CD14-positive monocyte (primary cell): ENCODE measurements at regions of chr11 and their contacts with region 1.

Region 1: GRCh38 chr11:10792398-10792975 is 16.2 kb downstream of the EIF4G2 start:
- DNase-seq: peak; percentile 83 to 89 (median 86)
- H3K4me3 ChIP-seq: no peak overlapping the region
- H3K4me3 Mint-ChIP-seq: peak overlapping the region in 1 of 2 donors; percentile 36
- H3K27ac ChIP-seq: no peak overlapping the region
- H3K27ac Mint-ChIP-seq: peak overlapping the region in 4 of 7 donors; percentile 21 to 46 (median 34)
- H3K4me1 ChIP-seq: peaks cover 19 to 21% of the 10 kb centered on the region in 2 donors
- H3K4me1 Mint-ChIP-seq: peaks cover 29% of the 10 kb centered on the region
- H3K27me3 ChIP-seq: peaks cover 0 to 4% of the 10 kb centered on the region in 2 donors
- H3K27me3 Mint-ChIP-seq: peaks cover 9 to 23% (median 10%) of the 10 kb centered on the region in 3 donors
- CTCF ChIP-seq: peak; percentile 90

Region 2: GRCh38 chr11:10514210-10514609 is 278.3 kb before region 1 on chr11:
- intact Hi-C with region 1: no loop called
- DNase-seq: peak in 1 of 3 donors; percentile 40
- H3K4me3 ChIP-seq: no peak overlapping the region
- H3K4me3 Mint-ChIP-seq: no peak overlapping the region
- H3K27ac ChIP-seq: no peak overlapping the region
- H3K27ac Mint-ChIP-seq: no peak overlapping the region
- H3K4me1 ChIP-seq: no peaks in the 10 kb centered on the region
- H3K4me1 Mint-ChIP-seq: peaks cover 5% of the 10 kb centered on the region
- H3K27me3 ChIP-seq: no peaks in the 10 kb centered on the region
- H3K27me3 Mint-ChIP-seq: no peaks in the 10 kb centered on the region
- CTCF ChIP-seq: peak; percentile 38

Region 3: DNA sequence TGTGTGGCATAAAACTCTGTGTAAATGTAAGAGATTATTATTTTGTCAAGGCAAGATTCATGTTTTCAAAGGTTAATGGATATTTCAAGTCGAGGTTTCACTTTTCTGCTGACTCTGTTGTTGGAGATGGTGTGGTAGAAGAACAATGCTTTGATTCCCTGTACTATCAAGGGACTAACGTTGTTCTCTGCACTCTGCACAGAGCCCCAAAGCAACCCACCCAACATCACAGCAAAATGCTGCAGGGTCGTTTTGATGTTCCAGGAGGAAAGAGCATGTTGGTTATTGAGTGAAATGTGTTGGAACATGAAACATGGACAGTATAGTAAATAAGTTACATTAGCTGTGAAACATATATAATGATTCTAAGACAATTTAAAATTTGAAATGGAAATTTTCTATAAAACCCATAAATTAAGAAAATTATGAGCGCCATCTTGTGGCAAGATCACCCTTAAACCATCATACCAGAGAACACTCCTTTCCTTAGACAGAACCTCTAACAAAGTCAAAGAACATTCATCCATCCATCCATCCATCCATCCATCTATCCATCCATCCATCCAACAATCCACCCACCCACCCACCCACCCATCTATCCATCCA is 229.7 kb after region 1 on chr11:
- intact Hi-C with region 1: loop called (anchors 2 to 5 kb)
- DNase-seq: peak in 2 of 3 donors; percentile 17 to 47
- H3K4me3 ChIP-seq: no peak overlapping the region
- H3K4me3 Mint-ChIP-seq: no peak overlapping the region
- H3K27ac ChIP-seq: no peak overlapping the region
- H3K27ac Mint-ChIP-seq: no peak overlapping the region
- H3K4me1 ChIP-seq: no peaks in the 10 kb centered on the region
- H3K4me1 Mint-ChIP-seq: peaks cover 4% of the 10 kb centered on the region
- H3K27me3 ChIP-seq: peaks cover 0 to 3% of the 10 kb centered on the region in 2 donors
- H3K27me3 Mint-ChIP-seq: peaks cover 0 to 2% (median 2%) of the 10 kb centered on the region in 3 donors
- CTCF ChIP-seq: peak; percentile 69

Region 4: GRCh38 chr11:11787305-11788062 is 995.0 kb after region 1 on chr11:
- intact Hi-C with region 1: loop called in 1 of 2 experiments (anchors 10 kb)
- DNase-seq: peak; percentile 55 to 66 (median 64)
- H3K4me3 ChIP-seq: no peak overlapping the region
- H3K4me3 Mint-ChIP-seq: no peak overlapping the region
- H3K27ac ChIP-seq: no peak overlapping the region
- H3K27ac Mint-ChIP-seq: peak overlapping the region in 1 of 7 donors; percentile 53
- H3K4me1 ChIP-seq: no peaks in the 10 kb centered on the region
- H3K4me1 Mint-ChIP-seq: peaks cover 6% of the 10 kb centered on the region
- H3K27me3 ChIP-seq: peaks cover under 1 to 2% of the 10 kb centered on the region in 2 donors
- H3K27me3 Mint-ChIP-seq: peaks cover 2 to 12% (median 10%) of the 10 kb centered on the region in 3 donors
- CTCF ChIP-seq: peak; percentile 83